Spleen (tissue), 13 donors: ENCODE measurements at regions of chr1 and their contacts with region 1.

Region 1: DNA sequence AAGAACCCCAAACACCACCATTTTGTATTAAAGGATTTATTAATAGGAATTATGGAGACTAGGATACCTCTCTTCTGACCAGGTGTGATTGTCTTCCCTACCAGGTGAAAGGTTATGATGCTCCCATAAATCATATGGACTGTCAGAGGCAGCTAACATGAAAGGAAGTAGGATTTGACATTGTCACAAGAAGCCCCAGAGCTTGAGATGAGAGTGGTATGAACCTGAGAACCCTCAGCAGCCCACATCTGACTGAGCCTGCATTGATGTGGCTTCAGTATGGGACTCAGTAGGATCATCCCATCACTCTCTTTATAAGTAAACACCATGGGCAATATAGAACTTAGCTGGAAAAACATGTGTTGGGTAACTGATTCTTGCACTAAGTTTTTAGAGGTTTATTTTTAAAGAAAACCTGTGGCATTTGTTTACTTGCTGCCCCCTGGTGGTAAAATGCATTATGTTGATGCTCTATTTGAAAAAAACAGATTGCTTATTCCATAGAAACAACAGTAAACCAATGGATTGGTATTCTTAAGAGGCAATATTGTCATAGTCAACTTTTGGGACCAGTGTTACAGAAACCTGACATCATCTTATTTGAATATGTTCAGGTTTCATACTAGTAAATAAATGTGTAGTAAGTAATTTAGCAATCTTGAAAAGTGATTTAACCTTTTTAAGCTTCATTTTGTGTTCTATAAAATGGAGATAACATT is 16.6 kb upstream of the CACYBP start:
- DNase-seq: no peak
- H3K4me3 ChIP-seq: no peak overlapping the region
- H3K27ac ChIP-seq: no peak overlapping the region
- H3K4me1 ChIP-seq: peaks cover 0 to 9% (median 0%) of the 10 kb centered on the region in 6 donors
- H3K27me3 ChIP-seq: no peaks in the 10 kb centered on the region
- CTCF ChIP-seq: peak in 10 of 11 experiments; percentile 37 to 81 (median 72)
- POLR2A ChIP-seq: no peak

Region 2: GRCh38 chr1:174769961-174770549 is 213.1 kb before region 1 on chr1:
- intact Hi-C with region 1: loop called (anchors 5 kb)
- DNase-seq: no peak
- H3K4me3 ChIP-seq: no peak overlapping the region
- H3K27ac ChIP-seq: no peak overlapping the region
- H3K4me1 ChIP-seq: peaks cover 0 to 5% (median 0%) of the 10 kb centered on the region in 6 donors
- H3K27me3 ChIP-seq: no peaks in the 10 kb centered on the region
- CTCF ChIP-seq: peak; percentile 53 to 78 (median 74)
- POLR2A ChIP-seq: no peak

Region 3: DNA sequence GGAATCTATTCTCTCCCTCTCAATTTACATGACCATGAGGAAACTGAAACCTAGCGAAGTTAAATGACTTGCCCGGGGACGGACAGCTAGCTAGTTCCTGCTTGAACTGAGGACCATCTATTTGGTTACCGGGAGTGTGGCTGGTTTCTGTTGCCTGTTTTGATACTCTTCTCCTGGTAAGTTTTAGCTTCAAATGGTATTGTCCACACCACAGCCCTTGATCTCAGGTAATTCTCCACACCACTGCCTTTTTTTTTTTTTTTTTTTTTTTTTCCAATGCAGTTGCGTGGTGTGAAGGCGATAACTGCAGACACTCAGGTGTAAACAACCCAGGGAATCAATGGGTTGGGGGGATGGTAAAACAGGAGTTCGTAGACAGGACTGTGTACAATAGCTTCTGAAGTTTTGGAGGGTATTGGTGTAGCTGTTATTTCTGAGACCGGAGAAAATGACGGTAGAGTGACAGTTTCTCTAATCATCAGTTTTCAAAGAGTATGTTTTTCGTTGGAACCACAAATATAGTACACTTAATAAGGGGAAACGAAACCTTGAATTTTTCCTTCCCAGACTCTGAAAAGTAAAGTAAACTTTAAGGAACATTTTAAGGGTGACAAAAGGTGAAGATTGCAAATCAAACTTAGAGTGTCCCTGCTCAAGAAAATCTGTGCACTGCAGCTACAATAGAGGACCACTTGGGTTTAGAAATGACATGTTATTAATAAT is 108.6 kb before region 1 on chr1:
- intact Hi-C with region 1: loop called (anchors 10 kb)
- DNase-seq: no peak
- H3K4me3 ChIP-seq: peak overlapping the region in 6 of 8 donors; percentile 4 to 61 (median 30)
- H3K27ac ChIP-seq: peak overlapping the region in 5 of 8 donors; percentile 29 to 71 (median 59)
- H3K4me1 ChIP-seq: peaks cover 0 to 40% (median 14%) of the 10 kb centered on the region in 6 donors
- H3K27me3 ChIP-seq: no peaks in the 10 kb centered on the region
- CTCF ChIP-seq: no peak
- POLR2A ChIP-seq: no peak

Region 4: GRCh38 chr1:174902531-174903099 is 80.5 kb before region 1 on chr1:
- intact Hi-C with region 1: no loop called
- DNase-seq: no peak
- H3K4me3 ChIP-seq: no peak overlapping the region
- H3K27ac ChIP-seq: no peak overlapping the region
- H3K4me1 ChIP-seq: no peaks in the 10 kb centered on the region
- H3K27me3 ChIP-seq: no peaks in the 10 kb centered on the region
- CTCF ChIP-seq: no peak
- POLR2A ChIP-seq: no peak